ENCODE measurements at regions of chr12 and their contacts with region 1.

Region 1: GRCh38 chr12:110600254-110600653 is 13.7 kb upstream of the TCTN1 start:
- DNase-seq: no peak
- ATAC-seq: no peak
- H3K4me3 ChIP-seq: no peak overlapping the region
- H3K27ac ChIP-seq: no peak overlapping the region
- H3K4me1 ChIP-seq: no peaks in the 10 kb centered on the region
- H3K27me3 ChIP-seq: no peaks in the 10 kb centered on the region
- CTCF ChIP-seq: no peak

Region 2: GRCh38 chr12:110513842-110514241 is 86.4 kb before region 1 on chr12:
- CTCF ChIA-PET with region 1: interaction called, 4 read pairs
- POLR2A ChIA-PET with region 1: no interaction called
- in situ Hi-C with region 1: no loop called
- intact Hi-C with region 1: loop called (anchors 5 kb)
- DNase-seq: no peak
- ATAC-seq: no peak
- H3K4me3 ChIP-seq: no peak overlapping the region
- H3K27ac ChIP-seq: no peak overlapping the region
- H3K4me1 ChIP-seq: no peaks in the 10 kb centered on the region
- H3K27me3 ChIP-seq: no peaks in the 10 kb centered on the region
- CTCF ChIP-seq: no peak

Region 3: GRCh38 chr12:110555577-110556406 is 44.5 kb before region 1 on chr12:
- CTCF ChIA-PET with region 1: interaction called, 11 read pairs
- POLR2A ChIA-PET with region 1: no interaction called
- in situ Hi-C with region 1: no loop called
- intact Hi-C with region 1: loop called (anchors 2 kb)
- DNase-seq: no peak
- ATAC-seq: no peak
- H3K4me3 ChIP-seq: no peak overlapping the region
- H3K27ac ChIP-seq: no peak overlapping the region
- H3K4me1 ChIP-seq: no peaks in the 10 kb centered on the region
- H3K27me3 ChIP-seq: no peaks in the 10 kb centered on the region
- CTCF ChIP-seq: no peak

Region 4: GRCh38 chr12:110661337-110661972 is 61.2 kb after region 1 on chr12:
- CTCF ChIA-PET with region 1: no interaction called
- POLR2A ChIA-PET with region 1: no interaction called
- in situ Hi-C with region 1: no loop called
- intact Hi-C with region 1: no loop called
- DNase-seq: no peak
- ATAC-seq: no peak
- H3K4me3 ChIP-seq: no peak overlapping the region
- H3K27ac ChIP-seq: no peak overlapping the region
- H3K4me1 ChIP-seq: no peaks in the 10 kb centered on the region
- H3K27me3 ChIP-seq: 0 out of 2 replicates have a peak, but pooled peaks cover 2% of the 10 kb centered on the region
- CTCF ChIP-seq: no peak